Activated naive CD4-positive, alpha-beta T cell treated with anti-CD3 and anti-CD28 coated beads for 36 hours (primary cell): ENCODE measurements at regions of chr1 and their contacts with region 1.

Region 1: DNA sequence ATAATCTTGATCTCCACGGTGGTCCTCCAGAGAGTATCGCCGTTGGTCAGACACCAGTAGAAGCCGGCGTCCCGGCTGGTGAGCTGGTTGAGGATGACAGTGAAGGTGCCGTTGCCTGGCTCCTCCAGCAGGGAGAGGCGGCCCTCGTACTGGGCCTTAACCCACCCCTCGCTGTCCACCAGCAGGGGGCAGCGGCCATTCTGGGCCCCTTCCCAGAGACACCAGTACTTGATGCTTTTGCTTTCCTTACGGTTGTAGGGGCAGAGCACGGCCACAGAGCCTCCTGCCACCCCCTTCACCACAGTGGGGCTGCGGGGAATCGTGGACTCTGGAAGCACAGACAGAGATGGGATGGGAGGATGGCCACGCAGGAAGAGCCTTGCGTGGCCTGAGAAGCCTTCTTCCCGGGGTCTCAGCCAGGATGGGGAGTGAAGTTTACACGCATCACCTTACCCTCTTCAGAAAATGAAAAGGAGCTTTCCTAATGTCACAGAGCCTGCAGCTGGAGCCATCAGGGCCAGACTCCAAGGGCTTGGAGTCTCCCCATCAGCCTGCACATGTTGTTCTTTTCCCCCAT is 10.7 kb downstream of the PIGR start:
- DNase-seq: peak; percentile 66
- H3K4me3 Mint-ChIP-seq: no peak overlapping the region
- H3K27ac Mint-ChIP-seq: no peak overlapping the region
- H3K4me1 Mint-ChIP-seq: peaks cover 18% of the 10 kb centered on the region
- H3K27me3 Mint-ChIP-seq: no peaks in the 10 kb centered on the region

Region 2: GRCh38 chr1:205812878-205813754 is 1122.5 kb before region 1 on chr1 and contains the start of gene SLC41A1:
- CTCF ChIA-PET with region 1: no interaction called
- intact Hi-C with region 1: no loop called
- DNase-seq: peak; percentile 95
- H3K4me3 Mint-ChIP-seq: peak within 1 kb of the TSS; percentile 89
- H3K27ac Mint-ChIP-seq: peak within 1 kb of the TSS; percentile 74
- H3K4me1 Mint-ChIP-seq: peaks cover 49% of the 10 kb centered on the region
- H3K27me3 Mint-ChIP-seq: no peaks in the 10 kb centered on the region
- total RNA-seq, gene SLC41A1: 32.1 to 33.9 TPM

Region 3: GRCh38 chr1:206725109-206725963 is 210.2 kb before region 1 on chr1:
- CTCF ChIA-PET with region 1: interaction called, 25 read pairs
- intact Hi-C with region 1: no loop called
- DNase-seq: peak; percentile 84
- H3K4me3 Mint-ChIP-seq: no peak overlapping the region
- H3K27ac Mint-ChIP-seq: no peak overlapping the region
- H3K4me1 Mint-ChIP-seq: peaks cover 39% of the 10 kb centered on the region
- H3K27me3 Mint-ChIP-seq: no peaks in the 10 kb centered on the region

Region 4: DNA sequence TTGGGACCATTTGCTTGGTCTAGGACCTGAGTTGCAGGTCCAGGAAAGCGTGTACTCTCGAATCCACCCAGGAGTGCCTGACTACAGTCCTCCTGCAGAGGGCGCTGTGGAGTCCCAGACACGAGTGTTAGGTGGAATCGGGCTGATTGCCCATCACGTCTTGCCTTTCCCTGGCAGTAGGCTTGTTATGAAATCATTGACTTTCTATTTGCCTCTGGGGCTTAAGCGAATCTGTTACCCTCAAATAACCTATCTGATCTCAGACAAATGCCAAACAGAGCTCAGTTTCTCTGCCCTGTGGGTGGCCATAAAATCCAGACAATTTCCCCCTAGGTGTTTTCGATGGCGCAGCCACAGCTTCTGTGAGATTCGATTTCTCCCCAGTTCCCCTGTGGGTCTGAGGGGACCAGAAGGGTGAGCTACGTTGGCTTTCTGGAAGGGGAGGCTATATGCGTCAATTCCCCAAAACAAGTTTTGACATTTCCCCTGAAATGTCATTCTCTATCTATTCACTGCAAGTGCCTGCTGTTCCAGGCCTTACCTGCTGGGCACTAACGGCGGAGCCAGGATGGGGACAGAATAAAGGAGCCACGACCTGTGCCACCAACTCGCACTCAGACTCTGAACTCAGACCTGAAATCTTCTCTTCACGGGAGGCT is 70.4 kb before region 1 on chr1 and contains the start of gene IL20:
- CTCF ChIA-PET with region 1: interaction called, 7 read pairs
- intact Hi-C with region 1: loop called (anchors 1 kb)
- DNase-seq: peak; percentile 98
- H3K4me3 Mint-ChIP-seq: no peak within 1 kb of the TSS
- H3K27ac Mint-ChIP-seq: no peak within 1 kb of the TSS
- H3K4me1 Mint-ChIP-seq: peaks cover 30% of the 10 kb centered on the region
- H3K27me3 Mint-ChIP-seq: no peaks in the 10 kb centered on the region
- total RNA-seq, gene IL20: 0.31 TPM in 1 of 2 experiments, not detected in the other

Region 5: DNA sequence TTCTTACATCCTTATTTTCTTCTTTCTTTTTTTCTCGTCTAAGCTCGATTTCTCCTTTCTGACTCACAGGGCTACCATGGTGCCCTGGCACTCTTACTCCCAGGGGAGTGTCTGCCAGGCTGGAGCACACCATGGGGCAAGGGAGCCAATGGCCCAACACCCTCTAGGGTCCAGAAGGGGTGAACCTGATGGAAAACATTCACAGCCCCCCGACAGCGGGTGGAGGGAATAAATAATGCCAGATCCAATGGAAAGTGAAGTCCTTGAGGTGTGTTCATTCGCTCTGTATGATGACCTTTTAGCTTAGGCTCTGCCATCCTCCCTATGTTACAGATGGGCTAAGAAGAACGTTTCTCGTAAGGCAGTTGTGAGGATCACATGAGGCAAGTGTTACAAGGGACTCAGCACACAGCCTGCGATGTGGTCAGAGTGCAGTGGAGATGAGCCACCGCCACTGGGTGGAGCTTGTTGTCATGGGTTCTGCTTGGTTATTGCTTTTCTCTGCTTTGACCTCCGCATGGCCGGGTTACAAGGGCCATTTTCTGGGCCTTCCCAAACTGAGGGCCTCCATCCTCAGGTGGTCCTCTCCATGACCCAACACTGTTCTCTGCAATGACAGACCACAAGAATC is 10.4 kb before region 1 on chr1:
- CTCF ChIA-PET with region 1: interaction called, 219 read pairs
- intact Hi-C with region 1: no loop called
- DNase-seq: peak; percentile 78
- H3K4me3 Mint-ChIP-seq: no peak overlapping the region
- H3K27ac Mint-ChIP-seq: no peak overlapping the region
- H3K4me1 Mint-ChIP-seq: peaks cover 24% of the 10 kb centered on the region
- H3K27me3 Mint-ChIP-seq: no peaks in the 10 kb centered on the region

Region 6: GRCh38 chr1:206952171-206952570 is 16.6 kb after region 1 on chr1:
- CTCF ChIA-PET with region 1: interaction called, 12 read pairs
- intact Hi-C with region 1: no loop called
- DNase-seq: no peak
- H3K4me3 Mint-ChIP-seq: no peak overlapping the region
- H3K27ac Mint-ChIP-seq: no peak overlapping the region
- H3K4me1 Mint-ChIP-seq: peaks cover 13% of the 10 kb centered on the region
- H3K27me3 Mint-ChIP-seq: no peaks in the 10 kb centered on the region

Region 7: DNA sequence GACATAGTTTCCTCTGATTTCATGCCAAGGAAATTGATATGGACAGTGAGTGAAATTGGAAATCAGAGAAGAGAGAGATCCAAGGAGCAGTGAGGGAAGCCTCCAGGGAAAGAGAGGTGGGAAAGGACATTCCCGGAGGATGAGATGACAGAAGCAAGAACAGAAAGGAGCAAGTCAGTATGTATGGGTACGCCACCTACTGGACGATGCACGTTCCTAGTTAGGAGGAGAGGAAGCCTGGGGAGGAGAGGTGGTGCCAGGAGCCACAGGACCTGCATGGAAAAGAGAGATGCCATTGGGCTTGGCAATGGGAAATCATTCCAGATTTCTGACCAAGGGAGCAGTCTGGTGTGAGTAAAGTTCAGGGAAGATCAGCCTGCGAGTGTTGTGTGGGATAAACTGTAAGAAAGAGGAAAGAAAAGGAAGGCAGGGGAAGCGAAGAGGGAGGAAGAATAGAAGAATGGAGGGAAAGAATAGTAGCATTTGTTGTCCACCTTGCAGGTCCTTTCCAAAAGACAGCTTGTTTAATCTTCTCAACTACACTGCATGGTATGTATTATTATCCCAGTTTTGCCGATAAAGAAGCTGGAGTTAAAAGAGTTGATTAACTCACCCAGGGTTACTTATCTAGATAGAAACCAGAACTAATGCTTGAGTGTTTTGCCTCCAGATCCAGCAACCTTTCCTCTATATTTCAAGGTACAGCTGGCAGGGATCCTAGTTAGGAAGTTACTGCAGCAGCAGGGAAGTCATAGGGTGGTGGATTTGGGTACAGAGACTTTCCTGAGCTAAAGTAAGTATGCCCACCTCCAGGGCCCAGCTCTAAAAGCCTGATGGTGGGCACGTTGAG is 69.6 kb after region 1 on chr1:
- CTCF ChIA-PET with region 1: interaction called, 21 read pairs
- intact Hi-C with region 1: no loop called
- DNase-seq: peak; percentile 62
- H3K4me3 Mint-ChIP-seq: no peak overlapping the region
- H3K27ac Mint-ChIP-seq: no peak overlapping the region
- H3K4me1 Mint-ChIP-seq: peaks cover 2% of the 10 kb centered on the region
- H3K27me3 Mint-ChIP-seq: peaks cover 2% of the 10 kb centered on the region

Region 8: DNA sequence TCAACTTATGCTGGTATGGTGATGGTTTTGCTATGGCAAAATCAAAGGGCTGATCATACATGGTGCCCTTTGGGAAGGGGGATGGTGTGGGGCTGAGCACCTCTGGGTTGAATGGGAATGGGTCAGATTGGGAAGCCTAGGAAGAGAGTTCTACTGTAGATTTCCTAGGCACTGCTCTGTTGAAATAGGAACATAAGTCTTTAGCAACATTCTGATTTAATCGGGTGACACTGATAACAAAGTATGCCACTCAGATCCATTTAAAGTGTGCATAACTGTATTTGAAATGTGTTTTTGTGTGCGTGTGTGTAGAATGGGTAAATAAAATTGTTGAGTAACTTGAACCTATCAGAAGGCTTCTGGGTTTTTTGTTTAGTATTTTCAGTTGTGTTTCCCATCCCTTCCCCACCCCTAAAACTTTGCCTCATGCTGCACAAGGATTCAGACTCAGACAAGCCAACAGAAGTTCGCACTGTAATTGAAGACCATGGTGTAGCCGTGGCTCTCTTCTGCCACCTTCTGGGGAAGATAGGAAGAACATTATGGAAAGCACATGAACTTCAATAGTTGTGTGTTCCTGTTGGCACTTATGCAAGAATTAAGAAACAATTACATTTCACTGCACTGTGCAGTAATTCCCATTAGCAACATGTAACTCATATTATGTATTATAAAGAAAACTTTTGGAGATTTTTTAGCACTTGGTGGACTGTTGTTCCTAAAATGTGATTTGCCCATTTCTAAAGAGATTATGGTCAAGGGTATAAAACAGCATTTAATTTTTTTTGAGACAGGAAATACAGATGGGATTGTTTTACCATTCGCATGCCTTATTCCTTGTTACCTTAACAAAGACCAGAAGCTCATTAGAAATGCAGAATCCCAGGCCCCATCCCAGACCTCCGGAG is 142.1 kb after region 1 on chr1:
- CTCF ChIA-PET with region 1: interaction called, 4 read pairs
- intact Hi-C with region 1: loop called (anchors 2 kb)
- DNase-seq: peak; percentile 82
- H3K4me3 Mint-ChIP-seq: no peak overlapping the region
- H3K27ac Mint-ChIP-seq: no peak overlapping the region
- H3K4me1 Mint-ChIP-seq: no peaks in the 10 kb centered on the region
- H3K27me3 Mint-ChIP-seq: no peaks in the 10 kb centered on the region

Region 9: GRCh38 chr1:207134581-207134980 is 199.0 kb after region 1 on chr1:
- CTCF ChIA-PET with region 1: no interaction called
- intact Hi-C with region 1: no loop called
- DNase-seq: no peak
- H3K4me3 Mint-ChIP-seq: no peak overlapping the region
- H3K27ac Mint-ChIP-seq: no peak overlapping the region
- H3K4me1 Mint-ChIP-seq: no peaks in the 10 kb centered on the region
- H3K27me3 Mint-ChIP-seq: no peaks in the 10 kb centered on the region